MCF 10A (cell line): ENCODE measurements at regions of chr5 and their contacts with region 1.

Region 1: GRCh38 chr5:153147891-153148623 is 342.4 kb upstream of the GRIA1 start:
- DNase-seq: peak; percentile 82
- H3K4me3 Mint-ChIP-seq: peak overlapping the region; percentile 11
- H3K27ac Mint-ChIP-seq: no peak overlapping the region
- H3K4me1 Mint-ChIP-seq: peaks cover 14% of the 10 kb centered on the region
- H3K27me3 Mint-ChIP-seq: no peaks in the 10 kb centered on the region
- CTCF ChIP-seq: peak; percentile 87

Region 2: GRCh38 chr5:152560512-152561137 is 587.4 kb before region 1 on chr5:
- CTCF ChIA-PET with region 1: interaction called, 144 read pairs
- POLR2A ChIA-PET with region 1: interaction called, 10 read pairs
- intact Hi-C with region 1: loop called (anchors 1 kb)
- DNase-seq: peak; percentile 82
- H3K4me3 Mint-ChIP-seq: no peak overlapping the region
- H3K27ac Mint-ChIP-seq: no peak overlapping the region
- H3K4me1 Mint-ChIP-seq: no peaks in the 10 kb centered on the region
- H3K27me3 Mint-ChIP-seq: no peaks in the 10 kb centered on the region
- CTCF ChIP-seq: peak; percentile 96

Region 3: DNA sequence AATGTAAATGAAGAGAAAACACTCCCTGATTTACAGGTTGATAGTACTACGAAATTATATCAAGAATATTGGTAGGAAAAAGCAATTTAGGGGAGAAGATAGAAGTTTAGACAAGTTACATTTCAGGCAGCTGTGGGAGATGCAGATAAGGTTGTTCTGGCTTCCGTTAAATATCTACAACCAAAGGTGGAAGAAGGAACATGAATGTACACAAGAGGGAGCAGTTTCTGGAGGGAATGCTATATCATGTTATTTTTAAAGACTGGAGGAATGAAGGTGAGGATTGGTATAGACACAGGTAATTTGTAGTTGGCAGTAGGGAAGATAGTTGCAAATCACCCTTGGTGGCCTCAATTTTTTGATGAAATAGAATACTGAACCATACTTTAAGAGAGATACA is 555.7 kb before region 1 on chr5:
- CTCF ChIA-PET with region 1: interaction called, 6 read pairs
- POLR2A ChIA-PET with region 1: no interaction called
- intact Hi-C with region 1: loop called (anchors 1 kb)
- DNase-seq: peak; percentile 6
- H3K4me3 Mint-ChIP-seq: no peak overlapping the region
- H3K27ac Mint-ChIP-seq: no peak overlapping the region
- H3K4me1 Mint-ChIP-seq: no peaks in the 10 kb centered on the region
- H3K27me3 Mint-ChIP-seq: no peaks in the 10 kb centered on the region
- CTCF ChIP-seq: peak; percentile 10

Region 4: DNA sequence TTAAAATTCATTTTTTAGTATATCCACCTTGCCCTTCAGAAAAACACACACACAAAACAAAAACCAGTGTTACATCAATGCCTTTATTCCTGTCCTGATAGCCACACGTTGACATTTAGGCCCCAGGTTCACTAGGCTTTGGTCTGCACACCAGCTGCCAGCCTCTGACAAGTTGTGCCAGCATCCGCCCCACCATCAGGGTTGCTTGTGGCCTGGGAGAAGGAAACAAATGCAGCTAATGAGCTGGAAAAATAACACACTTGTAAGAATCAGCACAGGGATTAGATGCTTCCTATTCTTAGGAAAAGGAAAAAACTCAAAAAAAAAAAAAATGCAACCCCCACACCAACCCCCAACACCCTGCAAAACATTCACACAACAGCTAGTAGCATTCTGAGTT is 61.6 kb before region 1 on chr5:
- CTCF ChIA-PET with region 1: interaction called, 17 read pairs
- POLR2A ChIA-PET with region 1: interaction called, 4 read pairs
- intact Hi-C with region 1: no loop called
- DNase-seq: no peak
- H3K4me3 Mint-ChIP-seq: no peak overlapping the region
- H3K27ac Mint-ChIP-seq: no peak overlapping the region
- H3K4me1 Mint-ChIP-seq: peaks cover 19% of the 10 kb centered on the region
- H3K27me3 Mint-ChIP-seq: no peaks in the 10 kb centered on the region
- CTCF ChIP-seq: no peak

Region 5: DNA sequence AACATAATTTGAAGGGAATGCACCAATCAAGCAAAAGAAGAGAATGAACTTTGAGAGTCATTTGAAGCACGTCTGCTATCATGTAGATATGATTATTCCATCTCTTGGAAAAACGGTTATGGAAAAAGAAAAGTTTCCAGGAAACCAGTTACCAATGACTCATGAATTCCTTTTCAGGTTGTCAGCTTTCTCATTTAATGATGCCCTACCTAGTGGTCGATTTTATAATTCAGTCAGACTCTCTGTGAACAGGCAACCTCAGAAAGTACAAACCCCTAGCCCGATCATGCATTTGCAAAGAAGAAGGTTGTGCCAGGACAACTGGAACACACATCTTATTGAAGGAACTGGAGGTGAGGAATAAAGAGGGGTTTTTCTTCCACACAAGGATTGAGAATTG is 12.6 kb before region 1 on chr5:
- CTCF ChIA-PET with region 1: interaction called, 41 read pairs
- POLR2A ChIA-PET with region 1: no interaction called
- intact Hi-C with region 1: no loop called
- DNase-seq: peak; percentile 38
- H3K4me3 Mint-ChIP-seq: no peak overlapping the region
- H3K27ac Mint-ChIP-seq: peak overlapping the region; percentile 46
- H3K4me1 Mint-ChIP-seq: peaks cover 13% of the 10 kb centered on the region
- H3K27me3 Mint-ChIP-seq: no peaks in the 10 kb centered on the region
- CTCF ChIP-seq: no peak

Region 6: DNA sequence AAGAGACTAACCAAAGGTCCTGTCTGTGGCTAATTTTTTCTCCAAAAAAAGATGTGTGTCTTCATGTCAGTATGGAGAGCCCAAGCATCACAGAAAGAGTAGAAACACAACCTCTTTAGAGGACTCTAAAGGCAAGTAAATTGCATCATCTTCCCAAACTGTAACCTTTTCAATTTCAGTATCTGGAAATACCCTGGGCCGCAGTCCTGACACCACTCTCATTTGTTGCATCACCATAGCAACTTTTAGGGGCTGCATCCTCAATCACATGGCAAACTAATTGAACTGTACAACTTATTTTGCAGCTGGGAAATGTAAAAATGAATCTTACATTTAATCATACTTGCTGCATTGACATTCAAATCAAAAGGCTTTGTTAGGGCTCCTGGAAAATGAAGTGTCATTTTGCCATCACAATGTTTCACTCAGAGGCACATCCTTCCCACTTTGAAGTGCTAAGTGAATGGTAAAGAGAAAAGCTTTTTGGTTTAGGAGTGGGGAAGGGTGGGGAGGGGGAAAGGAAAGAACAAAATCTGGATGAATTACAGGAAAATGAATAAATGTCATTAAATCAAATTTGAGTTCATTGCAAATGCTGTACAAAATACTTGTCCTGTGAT is 281.8 kb after region 1 on chr5:
- CTCF ChIA-PET with region 1: no interaction called
- POLR2A ChIA-PET with region 1: no interaction called
- intact Hi-C with region 1: no loop called
- DNase-seq: no peak
- H3K4me3 Mint-ChIP-seq: no peak overlapping the region
- H3K27ac Mint-ChIP-seq: no peak overlapping the region
- H3K4me1 Mint-ChIP-seq: no peaks in the 10 kb centered on the region
- H3K27me3 Mint-ChIP-seq: no peaks in the 10 kb centered on the region
- CTCF ChIP-seq: no peak

Region 7: GRCh38 chr5:153480401-153480800 is 332.3 kb after region 1 on chr5:
- CTCF ChIA-PET with region 1: interaction called, 18 read pairs
- POLR2A ChIA-PET with region 1: interaction called, 3 read pairs
- intact Hi-C with region 1: loop called (anchors 1 kb)
- DNase-seq: peak; percentile 65
- H3K4me3 Mint-ChIP-seq: no peak overlapping the region
- H3K27ac Mint-ChIP-seq: no peak overlapping the region
- H3K4me1 Mint-ChIP-seq: peaks cover 25% of the 10 kb centered on the region
- H3K27me3 Mint-ChIP-seq: no peaks in the 10 kb centered on the region
- CTCF ChIP-seq: no peak